ENCODE measurements at regions of chr6 and their contacts with region 1.

Region 1: DNA sequence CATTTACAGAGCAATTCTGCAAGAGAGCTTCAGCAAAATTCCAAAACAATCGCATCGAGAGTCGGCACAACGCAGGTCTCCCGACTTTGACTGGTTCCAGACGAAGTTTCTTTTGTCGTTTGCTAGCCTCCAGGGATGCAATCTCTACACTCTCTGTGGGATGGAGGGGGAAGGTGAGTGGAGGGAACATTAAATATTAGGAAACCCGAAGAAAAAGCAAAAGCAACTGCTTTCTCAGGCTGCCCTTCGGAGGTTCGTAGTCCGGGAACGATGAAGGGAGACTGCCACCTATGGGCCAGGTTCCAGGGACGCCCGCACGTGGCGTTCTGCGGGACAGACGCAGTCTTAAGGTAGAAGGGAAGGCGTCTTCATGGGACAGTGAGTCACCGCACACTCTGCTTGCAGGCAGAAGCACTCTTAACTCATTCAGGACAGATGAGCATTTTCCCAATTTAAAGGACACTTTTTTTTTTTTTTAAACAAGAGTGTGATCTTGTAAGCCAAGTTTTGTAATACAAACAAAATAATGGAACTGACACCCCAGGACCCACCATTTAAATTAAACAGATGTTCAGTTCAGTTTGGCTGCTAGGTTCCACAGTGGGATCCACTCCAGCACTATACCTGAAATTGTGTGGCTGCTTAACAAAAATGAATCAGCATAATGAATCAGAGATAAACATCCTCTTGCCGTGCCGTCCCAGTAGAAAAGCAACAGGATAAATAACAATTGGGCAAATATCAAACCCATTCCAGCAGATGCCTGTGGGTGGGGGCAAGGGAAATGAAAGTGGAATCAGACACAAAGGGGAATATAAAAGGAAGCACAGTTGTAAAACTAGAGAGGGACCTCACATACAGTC is 65.8 kb upstream of the ARMC2 start:
- DNase-seq: peak; percentile 92
- H3K4me3 Mint-ChIP-seq: peak overlapping the region; percentile 62
- H3K27ac Mint-ChIP-seq: peak overlapping the region; percentile 83
- H3K4me1 Mint-ChIP-seq: peaks cover 18% of the 10 kb centered on the region
- H3K27me3 Mint-ChIP-seq: no peaks in the 10 kb centered on the region
- CTCF ChIP-seq: peak; percentile 70

Region 2: GRCh38 chr6:108541838-108542759 is 240.3 kb before region 1 on chr6:
- CTCF ChIA-PET with region 1: interaction called, 8 read pairs
- POLR2A ChIA-PET with region 1: no interaction called
- intact Hi-C with region 1: loop called (anchors 1 kb)
- DNase-seq: peak; percentile 81
- H3K4me3 Mint-ChIP-seq: no peak overlapping the region
- H3K27ac Mint-ChIP-seq: no peak overlapping the region
- H3K4me1 Mint-ChIP-seq: peaks cover 6% of the 10 kb centered on the region
- H3K27me3 Mint-ChIP-seq: no peaks in the 10 kb centered on the region
- CTCF ChIP-seq: peak; percentile 88

Region 3: DNA sequence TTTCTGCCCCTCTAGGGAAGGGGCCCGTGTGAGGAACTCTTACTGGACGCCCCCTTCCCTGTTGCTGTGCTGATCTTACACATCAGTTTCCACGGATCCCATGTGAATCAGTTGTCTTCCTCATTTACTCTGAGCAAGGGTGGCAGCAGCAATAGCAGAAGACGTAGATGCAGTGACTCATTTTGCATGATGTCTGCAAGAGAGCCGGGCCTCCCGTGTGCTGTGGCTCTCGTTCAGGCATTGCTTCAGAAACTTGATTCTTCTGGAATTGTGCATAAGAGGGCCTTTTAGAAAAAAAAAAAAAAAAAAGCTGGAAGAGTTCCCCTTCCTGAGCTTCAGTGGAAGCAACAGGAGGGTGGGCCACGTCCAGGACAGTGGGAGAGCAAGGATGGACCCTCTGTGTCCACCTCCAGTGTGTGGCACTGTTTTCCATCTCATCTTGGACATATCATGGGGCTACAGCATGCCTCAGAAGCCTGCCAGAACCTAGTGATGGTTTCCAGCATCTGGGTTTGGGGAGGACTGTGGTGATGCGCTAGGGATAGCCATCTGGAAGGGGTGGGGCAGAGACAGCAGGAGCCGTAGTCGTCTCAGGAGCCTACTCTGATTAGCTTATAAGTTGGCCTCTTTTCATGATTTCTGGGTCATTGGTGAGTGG is 159.6 kb before region 1 on chr6:
- CTCF ChIA-PET with region 1: no interaction called
- POLR2A ChIA-PET with region 1: no interaction called
- intact Hi-C with region 1: loop called (anchors 2 kb)
- DNase-seq: peak; percentile 77
- H3K4me3 Mint-ChIP-seq: peak overlapping the region; percentile 38
- H3K27ac Mint-ChIP-seq: peak overlapping the region; percentile 77
- H3K4me1 Mint-ChIP-seq: peaks cover 76% of the 10 kb centered on the region
- H3K27me3 Mint-ChIP-seq: no peaks in the 10 kb centered on the region
- CTCF ChIP-seq: no peak

Region 4: DNA sequence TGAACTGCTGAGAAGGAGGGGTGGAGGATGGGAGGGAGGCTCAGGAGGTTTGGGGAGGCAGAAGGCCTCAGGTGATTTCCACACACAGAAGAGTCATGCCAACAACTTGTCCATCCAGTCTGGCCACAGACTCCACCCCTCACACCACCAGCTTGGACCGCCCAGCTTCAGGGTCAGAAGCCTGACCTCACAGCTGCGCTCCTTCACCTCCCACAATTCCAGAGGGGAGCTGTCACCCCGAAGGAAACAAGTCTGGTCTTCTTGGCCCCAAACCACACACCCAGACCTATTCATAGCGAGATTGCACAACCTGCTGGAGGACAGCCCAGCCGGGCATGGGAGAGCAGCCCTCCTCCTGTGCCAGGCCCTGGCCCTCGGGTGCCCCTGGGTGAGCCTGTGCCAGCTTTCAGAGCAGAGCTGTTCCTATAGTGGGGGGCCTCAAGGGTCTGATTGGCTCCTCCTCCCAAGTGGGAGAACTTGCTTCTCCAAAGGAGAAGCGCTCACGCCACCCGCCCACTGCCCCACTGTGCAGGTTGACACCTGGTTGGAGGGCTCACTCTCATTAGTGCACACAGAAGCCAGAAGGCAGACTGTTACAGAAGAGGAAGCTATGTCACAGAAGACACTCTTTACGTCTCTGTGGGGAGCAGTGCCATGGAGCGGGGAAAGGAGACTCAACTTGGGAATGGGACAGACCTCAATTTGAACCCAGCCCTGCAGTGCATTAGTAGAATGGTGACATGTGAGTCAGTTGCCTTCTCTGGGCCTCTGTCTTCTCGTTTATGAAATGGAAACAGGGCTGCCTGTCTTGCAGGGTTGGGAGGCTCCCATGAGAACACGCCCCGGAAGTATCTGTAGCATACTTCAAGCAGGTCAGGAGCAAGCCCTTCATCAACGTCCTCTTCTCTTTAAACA is 92.9 kb before region 1 on chr6:
- CTCF ChIA-PET with region 1: interaction called, 4 read pairs
- POLR2A ChIA-PET with region 1: interaction called, 7 read pairs
- intact Hi-C with region 1: loop called (anchors 2 kb)
- DNase-seq: peak; percentile 100
- H3K4me3 Mint-ChIP-seq: peak overlapping the region; percentile 32
- H3K27ac Mint-ChIP-seq: peak overlapping the region; percentile 73
- H3K4me1 Mint-ChIP-seq: peaks cover 51% of the 10 kb centered on the region
- H3K27me3 Mint-ChIP-seq: no peaks in the 10 kb centered on the region
- CTCF ChIP-seq: no peak

Region 5: DNA sequence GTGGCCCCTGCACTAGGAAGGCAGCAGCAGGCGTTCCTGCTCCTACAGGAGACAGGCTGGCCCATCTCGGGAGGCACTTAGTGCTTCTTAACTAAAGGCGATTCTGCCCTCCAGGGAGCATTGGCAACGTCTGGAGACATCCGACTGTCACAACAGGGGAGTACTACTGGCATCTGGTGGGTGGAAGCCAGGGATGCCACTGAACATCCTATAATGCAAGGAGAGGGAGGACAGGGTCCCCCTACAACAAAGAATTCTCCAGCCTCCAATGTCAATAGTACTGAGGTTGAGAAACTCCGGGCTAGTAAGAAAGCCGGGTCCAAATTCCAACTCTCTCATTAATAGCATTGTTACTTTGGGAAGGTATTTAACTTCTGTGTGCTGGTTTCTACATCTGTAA is 53.6 kb before region 1 on chr6:
- CTCF ChIA-PET with region 1: no interaction called
- POLR2A ChIA-PET with region 1: no interaction called
- intact Hi-C with region 1: no loop called
- DNase-seq: no peak
- H3K4me3 Mint-ChIP-seq: no peak overlapping the region
- H3K27ac Mint-ChIP-seq: no peak overlapping the region
- H3K4me1 Mint-ChIP-seq: peaks cover 14% of the 10 kb centered on the region
- H3K27me3 Mint-ChIP-seq: no peaks in the 10 kb centered on the region
- CTCF ChIP-seq: no peak

Region 6: DNA sequence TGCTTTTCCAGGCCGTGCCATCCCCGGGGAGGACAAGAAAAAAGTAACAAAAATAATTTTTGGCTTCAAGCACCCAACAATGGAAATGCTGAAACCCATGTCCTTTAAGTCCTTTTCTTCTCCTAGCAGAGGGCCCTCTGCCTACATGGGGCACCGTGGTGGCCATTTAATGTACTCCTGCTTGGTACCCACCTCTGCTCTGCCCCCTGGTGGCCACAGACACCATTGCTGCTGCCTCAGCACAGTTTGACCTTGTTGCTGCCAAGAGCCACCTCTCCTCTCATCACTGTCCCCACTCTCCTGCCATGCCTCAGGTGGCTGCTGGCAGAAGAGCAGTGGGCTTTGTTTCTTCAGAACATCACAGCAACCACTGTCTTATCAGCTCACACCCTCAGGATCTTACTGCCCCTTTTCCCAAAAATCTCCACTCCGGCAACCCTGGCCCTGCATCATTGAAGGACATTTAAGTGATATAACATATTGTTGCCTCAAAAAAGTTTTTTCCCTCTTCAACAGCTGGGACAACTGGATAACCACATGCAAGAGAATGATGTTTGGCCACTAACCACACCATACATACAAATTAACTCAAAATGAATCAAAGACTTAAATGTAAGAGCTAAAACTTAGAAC is 52.9 kb after region 1 on chr6:
- CTCF ChIA-PET with region 1: interaction called, 7 read pairs
- POLR2A ChIA-PET with region 1: interaction called, 13 read pairs
- intact Hi-C with region 1: loop called (anchors 1 kb)
- DNase-seq: peak; percentile 78
- H3K4me3 Mint-ChIP-seq: no peak overlapping the region
- H3K27ac Mint-ChIP-seq: no peak overlapping the region
- H3K4me1 Mint-ChIP-seq: peaks cover 34% of the 10 kb centered on the region
- H3K27me3 Mint-ChIP-seq: no peaks in the 10 kb centered on the region
- CTCF ChIP-seq: peak; percentile 94

Region 7: DNA sequence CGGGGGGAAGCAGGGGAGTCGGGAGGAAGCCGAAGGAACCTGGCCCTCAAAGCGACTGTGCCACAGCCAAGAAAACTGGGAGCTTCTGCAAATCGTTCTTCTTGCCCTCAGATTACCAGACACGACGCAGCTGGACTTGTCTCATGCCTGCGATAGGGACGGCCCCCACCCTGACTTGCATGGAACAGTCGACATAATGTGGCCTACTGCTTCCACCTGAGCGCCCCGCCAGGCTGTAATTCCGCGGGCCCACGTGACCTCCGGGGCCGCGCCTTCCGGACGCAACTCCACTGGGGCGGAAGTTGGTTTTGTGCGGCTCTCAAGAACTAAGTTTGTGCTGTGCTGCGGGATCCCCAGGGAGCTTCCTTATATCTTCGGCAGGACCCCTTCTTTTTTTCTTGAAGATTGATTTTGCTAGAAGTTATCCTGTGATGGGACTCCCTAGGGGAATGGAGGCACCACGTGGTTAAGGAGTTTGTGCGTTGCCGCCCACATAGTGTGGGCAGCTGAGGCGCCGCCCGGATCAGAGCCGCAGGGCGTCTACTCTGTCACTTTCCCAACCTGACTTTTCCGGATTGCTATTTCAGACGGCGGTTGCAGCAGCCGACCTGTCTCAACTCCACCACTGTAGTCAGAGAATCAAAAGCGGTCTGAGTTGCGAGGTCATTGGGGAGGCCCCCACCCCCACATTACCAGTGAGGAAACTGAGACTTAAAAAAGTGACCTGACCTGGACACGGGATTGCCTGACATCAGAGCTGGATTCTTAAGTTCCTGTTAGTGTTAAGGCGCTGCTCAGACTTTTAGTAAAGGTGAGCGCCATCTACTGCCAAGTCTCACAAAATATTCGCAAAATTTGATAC is 600.4 kb after region 1 on chr6:
- CTCF ChIA-PET with region 1: no interaction called
- POLR2A ChIA-PET with region 1: no interaction called
- intact Hi-C with region 1: no loop called
- DNase-seq: peak; percentile 94
- H3K4me3 Mint-ChIP-seq: peak overlapping the region; percentile 88
- H3K27ac Mint-ChIP-seq: peak overlapping the region; percentile 100
- H3K4me1 Mint-ChIP-seq: peaks cover 34% of the 10 kb centered on the region
- H3K27me3 Mint-ChIP-seq: no peaks in the 10 kb centered on the region
- CTCF ChIP-seq: peak; percentile 31